Mammary epithelial cell (primary cell): ENCODE measurements at regions of chr7 and their contacts with region 1.

Region 1: DNA sequence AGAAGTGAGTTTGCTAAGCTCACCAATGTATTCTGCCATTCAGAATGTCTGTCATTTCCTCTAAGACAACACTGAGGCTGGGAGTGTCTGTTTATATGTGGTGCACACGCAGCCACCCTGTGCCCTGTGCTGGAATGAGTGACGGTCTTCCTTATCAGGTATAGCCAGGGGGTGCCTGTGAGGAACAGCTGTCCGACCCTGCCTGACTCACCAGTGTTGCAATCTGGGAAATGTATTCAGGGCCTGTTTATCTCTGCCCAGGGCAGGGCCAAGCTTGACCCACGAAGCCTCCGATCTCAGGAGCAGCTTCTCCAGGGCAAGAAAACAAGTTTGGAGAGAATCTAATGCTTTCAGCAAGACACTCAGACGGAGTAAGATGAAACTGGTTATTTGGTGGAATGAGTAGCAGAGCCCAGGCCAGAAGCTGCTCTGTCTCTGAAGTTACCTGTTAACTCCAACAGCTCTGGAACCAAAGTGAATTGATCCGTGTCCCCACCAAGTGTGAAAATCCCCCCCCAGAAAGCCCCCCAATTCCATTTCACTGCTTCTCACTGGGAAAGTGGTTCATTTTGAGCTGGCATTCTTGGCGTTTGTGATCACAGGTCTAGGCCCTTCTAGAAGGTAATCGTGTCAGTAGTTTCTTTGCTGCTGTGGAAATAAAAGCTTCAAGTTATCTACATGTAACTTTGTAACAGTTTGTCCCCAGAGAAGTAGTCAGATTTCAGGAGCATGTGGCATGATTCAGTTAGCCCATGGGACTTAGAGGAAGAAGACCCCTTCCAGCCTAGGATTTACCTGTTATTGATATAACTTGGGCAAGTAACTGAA is 6.1 kb upstream of the UBE2H start:
- DNase-seq: peak; percentile 99
- H3K4me3 ChIP-seq: no peak overlapping the region
- H3K27ac ChIP-seq: peak overlapping the region; percentile 92
- H3K4me1 ChIP-seq: peaks cover 30% of the 10 kb centered on the region
- H3K27me3 ChIP-seq: no peaks in the 10 kb centered on the region
- CTCF ChIP-seq: peak in 1 of 2 donors; percentile 7

Region 2: GRCh38 chr7:129859183-129859582 is 99.7 kb before region 1 on chr7:
- CTCF ChIA-PET with region 1: no interaction called
- dilution Hi-C with region 1: loop called (anchors 5 kb)
- in situ Hi-C with region 1: no loop called
- intact Hi-C with region 1: no loop called
- DNase-seq: peak; percentile 48
- H3K4me3 ChIP-seq: no peak overlapping the region
- H3K27ac ChIP-seq: no peak overlapping the region
- H3K4me1 ChIP-seq: peaks cover 23% of the 10 kb centered on the region
- H3K27me3 ChIP-seq: no peaks in the 10 kb centered on the region
- CTCF ChIP-seq: no peak

Region 3: DNA sequence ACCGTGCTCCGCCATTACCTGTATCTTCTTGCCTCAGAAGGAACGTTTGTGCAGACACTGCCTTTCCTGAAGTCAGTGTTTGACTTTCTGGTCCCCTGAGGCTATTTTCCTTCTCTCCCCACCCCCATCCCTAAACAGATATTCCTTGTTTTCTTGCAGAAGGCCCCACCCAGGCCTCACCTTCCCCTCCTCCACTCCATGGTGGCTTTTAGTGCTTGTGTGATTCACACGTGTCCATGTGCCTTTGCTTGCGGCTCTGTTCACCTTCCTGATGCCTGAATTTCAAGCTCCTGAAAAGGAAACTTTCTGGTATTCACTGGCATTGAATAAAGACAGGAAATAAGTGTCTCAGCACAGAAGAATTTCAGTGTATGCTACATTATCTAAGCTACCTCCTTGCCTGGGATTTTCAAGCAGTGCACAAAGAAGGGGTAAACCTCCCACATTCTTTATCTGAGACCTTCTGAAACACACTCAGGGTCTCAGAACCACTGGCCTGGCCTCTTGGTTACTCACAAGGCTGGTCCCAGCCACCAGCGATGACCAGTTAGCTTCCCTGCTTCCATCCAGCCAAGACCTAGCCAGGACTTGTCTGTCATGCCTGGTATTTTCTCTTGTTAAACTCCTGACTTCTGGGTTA is 11.1 kb after region 1 on chr7:
- CTCF ChIA-PET with region 1: no interaction called
- dilution Hi-C with region 1: no loop called
- in situ Hi-C with region 1: no loop called
- intact Hi-C with region 1: loop called (anchors 1 kb)
- DNase-seq: peak; percentile 98
- H3K4me3 ChIP-seq: peak overlapping the region in 1 of 3 experiments; percentile 14
- H3K27ac ChIP-seq: peak overlapping the region; percentile 96
- H3K4me1 ChIP-seq: peaks cover 21% of the 10 kb centered on the region
- H3K27me3 ChIP-seq: no peaks in the 10 kb centered on the region
- CTCF ChIP-seq: no peak

Region 4: GRCh38 chr7:129989466-129989865 is 30.6 kb after region 1 on chr7:
- CTCF ChIA-PET with region 1: no interaction called
- dilution Hi-C with region 1: no loop called
- in situ Hi-C with region 1: no loop called
- intact Hi-C with region 1: loop called (anchors 1 kb)
- DNase-seq: peak; percentile 24
- H3K4me3 ChIP-seq: no peak overlapping the region
- H3K27ac ChIP-seq: no peak overlapping the region
- H3K4me1 ChIP-seq: no peaks in the 10 kb centered on the region
- H3K27me3 ChIP-seq: no peaks in the 10 kb centered on the region
- CTCF ChIP-seq: no peak